Activated naive CD4-positive, alpha-beta T cell treated with anti-CD3 and anti-CD28 coated beads for 36 hours (primary cell): ENCODE measurements at regions of chr13 and their contacts with region 1.

Region 1: GRCh38 chr13:40221460-40222201 is 444.8 kb downstream of the FOXO1 start:
- DNase-seq: peak; percentile 80
- H3K4me3 Mint-ChIP-seq: peak overlapping the region; percentile 25
- H3K27ac Mint-ChIP-seq: peak overlapping the region; percentile 92
- H3K4me1 Mint-ChIP-seq: peaks cover 69% of the 10 kb centered on the region
- H3K27me3 Mint-ChIP-seq: no peaks in the 10 kb centered on the region

Region 2: DNA sequence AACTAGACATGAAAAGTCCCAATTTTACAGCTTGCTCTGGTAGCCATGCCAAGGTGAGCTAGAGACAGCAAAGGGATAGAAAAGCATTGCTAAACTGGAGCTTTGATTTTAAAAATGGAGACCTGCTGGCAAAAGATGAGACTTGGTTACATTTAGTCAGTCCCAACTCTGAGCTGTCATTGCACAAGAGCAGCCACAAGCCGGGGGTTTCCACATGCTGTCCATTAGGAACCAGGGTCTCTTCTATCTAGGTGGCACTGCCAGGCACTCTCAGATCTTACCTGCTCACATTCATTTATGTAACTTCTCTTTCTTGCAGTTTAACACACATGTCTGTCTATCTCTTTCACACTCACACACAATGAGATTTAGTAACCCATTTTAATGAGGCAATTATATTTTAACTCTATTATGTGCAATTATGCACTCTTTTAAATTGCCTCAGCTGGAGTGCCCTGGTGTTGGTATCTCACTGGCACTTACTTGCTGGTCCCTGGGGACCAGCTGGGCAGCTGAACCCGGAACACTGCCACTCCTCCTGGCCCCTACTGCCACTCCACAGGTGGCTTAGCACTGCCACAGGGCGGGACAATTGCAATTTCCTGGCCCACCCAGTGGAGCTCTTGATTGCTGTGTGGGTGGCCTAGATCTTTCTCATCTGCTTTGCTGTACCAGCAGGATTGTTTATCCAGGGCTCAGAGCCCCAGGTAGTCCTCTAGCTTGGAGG is 453.7 kb before region 1 on chr13:
- CTCF ChIA-PET with region 1: no interaction called
- intact Hi-C with region 1: no loop called
- DNase-seq: no peak
- H3K4me3 Mint-ChIP-seq: no peak overlapping the region
- H3K27ac Mint-ChIP-seq: no peak overlapping the region
- H3K4me1 Mint-ChIP-seq: no peaks in the 10 kb centered on the region
- H3K27me3 Mint-ChIP-seq: no peaks in the 10 kb centered on the region

Region 3: GRCh38 chr13:40026174-40026585 is 195.5 kb before region 1 on chr13:
- CTCF ChIA-PET with region 1: no interaction called
- intact Hi-C with region 1: loop called (anchors 2 kb)
- DNase-seq: peak; percentile 82
- H3K4me3 Mint-ChIP-seq: no peak overlapping the region
- H3K27ac Mint-ChIP-seq: no peak overlapping the region
- H3K4me1 Mint-ChIP-seq: peaks cover 33% of the 10 kb centered on the region
- H3K27me3 Mint-ChIP-seq: peaks cover 2% of the 10 kb centered on the region

Region 4: GRCh38 chr13:40132249-40132648 is 89.4 kb before region 1 on chr13:
- CTCF ChIA-PET with region 1: no interaction called
- intact Hi-C with region 1: loop called (anchors 1 kb)
- DNase-seq: peak; percentile 87
- H3K4me3 Mint-ChIP-seq: no peak overlapping the region
- H3K27ac Mint-ChIP-seq: peak overlapping the region; percentile 66
- H3K4me1 Mint-ChIP-seq: peaks cover 25% of the 10 kb centered on the region
- H3K27me3 Mint-ChIP-seq: no peaks in the 10 kb centered on the region

Region 5: DNA sequence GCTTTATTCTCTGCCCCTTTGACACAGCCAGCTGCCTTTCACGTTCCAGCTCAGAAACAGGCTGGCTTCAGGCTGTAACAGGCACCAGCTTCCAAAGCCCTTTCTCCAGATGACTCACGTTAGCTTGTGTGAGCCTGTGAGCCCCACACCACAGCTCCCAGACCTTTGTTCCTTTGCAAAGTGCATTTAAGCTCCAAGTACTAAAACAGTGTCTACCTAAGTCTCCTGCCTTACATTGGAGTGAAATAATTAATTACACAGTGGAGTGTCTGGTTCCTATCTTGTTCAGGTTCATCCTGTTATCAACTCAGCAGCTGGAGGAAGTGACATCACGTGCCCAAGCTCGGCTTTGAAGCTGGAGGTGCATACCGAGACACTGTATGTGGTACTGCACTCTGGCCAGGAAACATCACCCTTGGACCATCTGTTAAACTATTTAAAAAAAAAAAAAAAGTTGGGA is 31.0 kb before region 1 on chr13:
- CTCF ChIA-PET with region 1: interaction called, 4 read pairs
- intact Hi-C with region 1: loop called (anchors 1 kb)
- DNase-seq: peak; percentile 91
- H3K4me3 Mint-ChIP-seq: peak overlapping the region; percentile 36
- H3K27ac Mint-ChIP-seq: peak overlapping the region; percentile 81
- H3K4me1 Mint-ChIP-seq: peaks cover 69% of the 10 kb centered on the region
- H3K27me3 Mint-ChIP-seq: no peaks in the 10 kb centered on the region

Region 6: DNA sequence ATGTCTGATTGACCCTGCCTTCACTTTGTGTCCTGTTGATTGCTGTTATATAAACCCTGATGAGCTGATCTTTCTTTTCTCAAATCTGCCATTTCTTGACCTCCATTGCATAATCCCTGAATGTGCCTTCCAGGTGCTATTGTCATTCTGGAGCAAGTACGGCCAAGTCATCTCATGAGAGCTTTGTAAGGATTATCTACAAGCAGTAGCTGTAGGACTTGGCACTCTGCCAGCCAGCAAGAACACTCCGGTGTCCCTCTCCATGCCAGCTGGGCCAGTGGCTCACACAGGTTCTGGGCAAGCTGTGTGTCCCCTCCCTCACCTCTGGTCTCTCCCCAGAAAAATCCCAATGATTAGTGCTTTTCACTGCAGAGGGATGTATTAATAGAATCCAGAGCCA is 96.7 kb after region 1 on chr13:
- CTCF ChIA-PET with region 1: no interaction called
- intact Hi-C with region 1: loop called (anchors 1 kb)
- DNase-seq: peak; percentile 23
- H3K4me3 Mint-ChIP-seq: no peak overlapping the region
- H3K27ac Mint-ChIP-seq: no peak overlapping the region
- H3K4me1 Mint-ChIP-seq: peaks cover 64% of the 10 kb centered on the region
- H3K27me3 Mint-ChIP-seq: no peaks in the 10 kb centered on the region

Region 7: DNA sequence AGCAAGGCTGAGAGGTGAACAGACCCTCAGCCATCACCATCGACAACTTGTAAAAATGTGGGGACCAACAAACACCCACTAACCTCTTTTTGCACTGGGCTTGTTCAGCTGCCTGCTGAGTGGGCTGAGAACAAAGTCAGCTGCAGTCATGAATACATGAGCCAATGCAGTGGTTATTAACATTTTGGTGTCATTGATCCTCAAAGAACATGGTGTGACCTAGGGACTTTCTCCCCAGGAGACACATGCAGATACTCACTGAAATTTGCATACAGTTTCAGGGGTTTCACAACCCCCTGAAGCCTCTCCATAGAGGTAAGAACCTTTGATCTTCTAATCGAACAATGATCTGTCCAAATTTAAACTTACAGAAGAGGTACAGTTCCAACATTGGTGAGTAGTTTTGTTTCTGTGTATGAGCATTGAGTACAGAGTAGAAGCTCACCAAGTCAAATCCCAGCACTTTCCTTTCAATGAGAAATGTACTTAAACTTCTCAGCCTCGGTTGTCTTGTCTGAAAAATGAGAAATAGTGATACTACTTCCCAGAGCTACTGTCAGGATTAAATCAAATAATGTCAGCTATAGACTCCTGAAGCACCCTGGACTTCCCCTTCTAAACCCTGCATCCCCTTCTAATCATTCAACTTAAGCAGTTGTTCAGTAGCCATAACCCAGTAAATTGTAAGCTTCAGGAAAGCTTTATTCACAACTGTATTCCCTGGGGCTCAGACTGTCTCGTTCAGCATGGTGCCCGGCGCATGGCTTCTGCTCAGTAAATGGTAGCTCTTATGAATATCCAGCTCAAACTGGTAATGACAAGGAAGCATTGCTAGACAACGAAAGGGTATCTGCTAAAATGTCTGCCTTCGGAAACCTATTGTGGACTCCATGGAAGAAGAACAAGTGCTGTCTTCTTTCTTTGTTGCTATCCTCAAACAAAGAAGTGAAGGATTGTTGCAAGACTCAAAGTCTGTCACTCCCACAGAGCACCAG is 296.2 kb after region 1 on chr13:
- CTCF ChIA-PET with region 1: no interaction called
- intact Hi-C with region 1: loop called (anchors 1 kb)
- DNase-seq: peak; percentile 57
- H3K4me3 Mint-ChIP-seq: peak overlapping the region; percentile 23
- H3K27ac Mint-ChIP-seq: peak overlapping the region; percentile 87
- H3K4me1 Mint-ChIP-seq: peaks cover 78% of the 10 kb centered on the region
- H3K27me3 Mint-ChIP-seq: no peaks in the 10 kb centered on the region